ENCODE measurements at regions of chr14 and their contacts with region 1.

Region 1: GRCh38 chr14:105061428-105062047 is 3.7 kb downstream of the GPR132 start:
- DNase-seq: no peak
- H3K4me3 ChIP-seq: no peak overlapping the region
- H3K27ac ChIP-seq: no peak overlapping the region
- H3K4me1 ChIP-seq: peaks cover 0 to 9% (median 6%) of the 10 kb centered on the region in 4 experiments; a peak in 4 of 7 replicates
- H3K27me3 ChIP-seq: peaks cover 0 to 8% (median 5%) of the 10 kb centered on the region in 4 experiments; a peak in 4 of 7 replicates
- CTCF ChIP-seq: no peak
- EP300 ChIP-seq: no peak
- POLR2A ChIP-seq: no peak
- RAD21 ChIP-seq: no peak

Region 2: GRCh38 chr14:105086833-105087307 is 25.3 kb after region 1 on chr14:
- CTCF ChIA-PET with region 1: interaction called, 25 read pairs
- POLR2A ChIA-PET with region 1: no interaction called
- DNase-seq: peak; percentile 56 to 89
- H3K4me3 ChIP-seq: peak overlapping the region; percentile 36 to 72 (median 50)
- H3K27ac ChIP-seq: no peak overlapping the region
- H3K4me1 ChIP-seq: peaks cover 0 to 10% (median 5%) of the 10 kb centered on the region in 4 experiments; a peak in 3 of 7 replicates
- H3K27me3 ChIP-seq: peaks cover 12 to 44% (median 34%) of the 10 kb centered on the region in 4 experiments
- CTCF ChIP-seq: peak in 2 of 3 experiments; percentile 79 to 93; a peak in 3 of 4 replicates
- EP300 ChIP-seq: peak in 1 of 2 experiments; percentile 41; a peak in 1 of 3 replicates
- POLR2A ChIP-seq: no peak
- RAD21 ChIP-seq: peak; percentile 72 to 82

Measured in H1 (cell line).